ENCODE measurements at regions of chr2 and their contacts with region 1.

Region 1: DNA sequence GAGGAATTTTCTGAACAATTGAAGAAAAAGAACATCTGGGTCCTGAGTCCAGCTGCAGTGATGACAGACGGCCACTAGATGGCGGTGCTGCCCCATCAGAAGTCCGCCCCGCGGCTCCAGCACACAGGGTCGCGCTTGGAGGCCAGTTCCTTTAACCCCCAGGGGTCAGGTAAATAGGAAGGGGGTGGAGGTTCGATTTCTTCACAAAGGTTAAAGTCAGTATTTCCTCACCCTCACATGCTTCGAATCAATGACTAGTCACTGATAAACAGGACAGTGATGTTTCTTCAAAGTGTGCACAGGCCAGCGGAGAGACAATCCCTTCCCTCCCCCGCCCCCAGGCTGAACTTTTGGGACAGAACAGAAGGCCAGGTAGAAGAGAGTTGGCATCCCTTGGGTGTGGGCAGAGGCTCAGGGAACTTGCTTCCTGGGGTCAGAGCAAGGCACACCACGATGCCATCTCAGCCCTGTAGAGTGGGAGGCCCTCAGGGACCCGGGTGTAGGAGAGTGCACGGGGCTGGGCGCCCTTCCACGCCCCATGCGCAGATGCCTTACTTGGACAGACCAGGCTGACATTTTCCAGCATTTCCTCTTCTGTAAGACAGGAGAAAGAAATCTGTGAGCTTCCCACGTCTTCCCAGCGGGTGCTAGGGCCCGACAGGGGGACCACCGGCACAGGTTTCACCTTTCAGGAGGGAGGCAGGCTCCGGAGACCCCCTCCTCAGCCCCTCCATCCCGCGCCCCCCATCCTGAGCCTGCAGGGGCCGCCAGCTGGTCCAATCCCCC is 722 bp downstream of the APOB start:
- DNase-seq: peak; percentile 77 to 89 (median 83)
- ATAC-seq: peak; percentile 13 to 71 (median 48)
- H3K4me3 ChIP-seq: peak overlapping the region; percentile 63 to 86 (median 78)
- H3K27ac ChIP-seq: peak overlapping the region; percentile 90 to 99 (median 97)
- H3K4me1 ChIP-seq: peaks cover 0 to 42% (median 11%) of the 10 kb centered on the region in 4 donors
- H3K27me3 ChIP-seq: no peaks in the 10 kb centered on the region
- CTCF ChIP-seq: peak; percentile 97 to 99 (median 98)
- POLR2A ChIP-seq: peak; percentile 12

Region 2: DNA sequence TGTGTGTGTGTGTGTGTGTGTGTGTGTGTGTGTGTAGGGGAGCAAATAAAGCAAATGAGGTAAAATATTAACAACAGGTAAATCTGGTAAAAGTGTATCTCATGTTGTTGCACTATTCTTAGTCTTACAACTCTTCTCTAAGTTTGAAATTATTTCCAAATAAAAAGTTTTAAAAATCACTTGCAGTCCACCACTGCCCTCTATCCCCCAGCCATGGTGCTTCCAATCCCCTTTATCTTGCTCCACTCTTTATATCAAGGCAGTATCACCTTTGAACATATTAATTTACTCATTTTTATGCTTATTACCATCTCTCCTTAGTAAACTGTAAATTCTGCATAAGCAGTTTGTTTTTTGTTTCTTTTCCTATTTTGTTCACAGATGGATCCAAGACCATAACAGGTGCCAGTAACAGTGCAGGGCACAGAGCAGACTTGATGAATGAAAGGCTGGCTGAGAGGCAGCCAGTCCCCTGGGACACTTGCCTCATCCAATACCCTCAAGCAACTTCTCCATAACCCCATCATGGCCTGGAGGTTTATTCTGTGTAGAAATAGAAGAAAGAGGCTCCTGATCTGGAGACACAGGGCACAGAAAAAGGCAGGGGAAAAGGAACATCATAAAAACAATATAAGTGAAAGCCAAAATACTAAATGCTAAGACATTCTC is 287.9 kb before region 1 on chr2:
- intact Hi-C with region 1: no loop called
- DNase-seq: no peak
- ATAC-seq: peak in 3 of 4 donors; percentile 29 to 38 (median 38)
- H3K4me3 ChIP-seq: no peak overlapping the region
- H3K27ac ChIP-seq: no peak overlapping the region
- H3K4me1 ChIP-seq: peaks cover 0 to 7% (median 2%) of the 10 kb centered on the region in 4 donors
- H3K27me3 ChIP-seq: no peaks in the 10 kb centered on the region
- CTCF ChIP-seq: peak; percentile 23 to 26 (median 25)
- POLR2A ChIP-seq: no peak

Region 3: DNA sequence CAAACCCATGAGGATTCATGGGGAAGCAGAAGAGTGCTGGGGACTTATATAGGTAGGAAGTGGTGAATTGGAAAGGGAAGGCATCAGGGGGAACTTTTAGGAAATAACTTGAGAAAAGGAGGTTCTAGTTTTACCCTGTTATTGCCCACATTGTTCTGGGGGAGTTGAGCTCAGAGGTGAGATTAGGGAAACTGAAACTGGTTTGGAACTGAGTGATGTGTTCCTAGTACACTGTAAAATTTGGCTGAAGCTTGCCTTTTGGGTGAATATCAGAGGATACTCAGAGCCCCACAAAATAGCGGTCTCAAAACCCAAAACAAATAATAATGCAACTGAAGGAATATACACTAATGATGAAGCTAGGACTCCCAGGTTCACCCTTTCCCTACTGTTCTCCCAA is 40.3 kb after region 1 on chr2:
- intact Hi-C with region 1: no loop called
- DNase-seq: no peak
- ATAC-seq: peak; percentile 30 to 77 (median 57)
- H3K4me3 ChIP-seq: no peak overlapping the region
- H3K27ac ChIP-seq: no peak overlapping the region
- H3K4me1 ChIP-seq: no peaks in the 10 kb centered on the region
- H3K27me3 ChIP-seq: no peaks in the 10 kb centered on the region
- CTCF ChIP-seq: no peak
- POLR2A ChIP-seq: no peak

Region 4: DNA sequence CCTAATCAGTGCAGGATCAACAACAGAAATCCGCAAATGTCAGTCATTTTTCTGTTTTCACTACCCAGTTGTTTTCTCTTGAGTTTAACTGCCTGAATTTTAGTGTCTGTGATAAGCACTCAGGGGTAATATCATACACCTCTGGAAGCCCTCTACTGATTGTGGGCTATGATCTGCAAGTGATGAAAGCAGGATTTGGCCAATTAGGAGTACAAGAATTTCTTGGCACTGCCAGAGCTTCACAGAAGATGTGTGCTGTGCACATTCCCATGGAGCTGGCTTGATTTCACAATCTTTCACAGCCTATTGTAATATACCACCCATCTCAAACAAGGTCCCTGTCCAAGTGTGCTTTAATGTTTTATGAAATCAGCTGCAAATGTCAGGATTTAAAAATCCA is 53.3 kb after region 1 on chr2:
- intact Hi-C with region 1: loop called (anchors 10 kb)
- DNase-seq: peak in 1 of 3 donors; percentile 77
- ATAC-seq: peak; percentile 59 to 76 (median 66)
- H3K4me3 ChIP-seq: peak overlapping the region; percentile 39 to 62 (median 58)
- H3K27ac ChIP-seq: peak overlapping the region; percentile 66 to 95 (median 89)
- H3K4me1 ChIP-seq: peaks cover 0 to 52% (median 25%) of the 10 kb centered on the region in 4 donors
- H3K27me3 ChIP-seq: no peaks in the 10 kb centered on the region
- CTCF ChIP-seq: no peak
- POLR2A ChIP-seq: peak; percentile 91

Measured in right lobe of liver (tissue), 6 donors.